ENCODE measurements at regions of chr5 and their contacts with region 1.

Region 1: GRCh38 chr5:42767491-42768105 is 11.0 kb downstream of the CCDC152 start:
- DNase-seq: no peak
- H3K4me3 ChIP-seq: no peak overlapping the region
- H3K27ac ChIP-seq: no peak overlapping the region
- H3K4me1 ChIP-seq: peaks cover 0 to under 1% of the 10 kb centered on the region in 2 donors
- H3K27me3 ChIP-seq: no peaks in the 10 kb centered on the region
- CTCF ChIP-seq: peak; percentile 30 to 73 (median 65)
- POLR2A ChIP-seq: no peak

Region 2: GRCh38 chr5:41856644-41857491 is 910.7 kb before region 1 on chr5:
- intact Hi-C with region 1: loop called in 1 of 2 experiments (anchors 5 kb)
- DNase-seq: peak; percentile 22 to 67 (median 58)
- H3K4me3 ChIP-seq: no peak overlapping the region
- H3K27ac ChIP-seq: no peak overlapping the region
- H3K4me1 ChIP-seq: no peaks in the 10 kb centered on the region
- H3K27me3 ChIP-seq: no peaks in the 10 kb centered on the region
- CTCF ChIP-seq: peak; percentile 65 to 80 (median 74)
- POLR2A ChIP-seq: no peak

Region 3: DNA sequence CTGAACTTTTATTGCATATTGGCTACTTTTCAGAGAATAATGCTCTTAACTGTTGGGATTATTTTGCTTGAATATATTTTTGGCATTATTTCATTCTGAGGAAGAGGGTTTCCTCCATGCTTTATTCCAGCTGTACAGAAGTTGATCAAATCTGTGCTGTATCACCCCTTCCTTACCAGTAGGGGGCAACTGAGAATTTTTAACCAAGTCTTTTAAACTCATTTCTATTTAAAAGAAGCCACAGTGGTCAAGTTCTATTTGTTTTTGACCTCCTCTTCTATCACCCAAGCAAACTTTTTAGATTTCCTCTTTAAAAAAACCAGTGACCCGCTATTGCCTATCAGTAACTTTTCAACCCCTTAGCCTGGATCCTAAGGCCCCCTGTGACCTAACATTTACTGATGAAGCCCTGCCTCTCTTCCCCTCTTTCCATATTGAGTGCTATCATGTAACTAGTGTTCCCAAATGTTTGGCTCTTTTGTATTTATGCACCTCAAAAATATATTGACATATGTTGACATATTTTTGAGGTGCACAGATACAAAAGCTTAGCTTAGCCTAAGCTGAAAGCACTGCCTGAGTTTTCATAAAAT is 761.9 kb before region 1 on chr5:
- intact Hi-C with region 1: loop called (anchors 10 kb)
- DNase-seq: no peak
- H3K4me3 ChIP-seq: no peak overlapping the region
- H3K27ac ChIP-seq: no peak overlapping the region
- H3K4me1 ChIP-seq: no peaks in the 10 kb centered on the region
- H3K27me3 ChIP-seq: no peaks in the 10 kb centered on the region
- CTCF ChIP-seq: peak; percentile 40 to 74 (median 60)
- POLR2A ChIP-seq: no peak

Region 4: DNA sequence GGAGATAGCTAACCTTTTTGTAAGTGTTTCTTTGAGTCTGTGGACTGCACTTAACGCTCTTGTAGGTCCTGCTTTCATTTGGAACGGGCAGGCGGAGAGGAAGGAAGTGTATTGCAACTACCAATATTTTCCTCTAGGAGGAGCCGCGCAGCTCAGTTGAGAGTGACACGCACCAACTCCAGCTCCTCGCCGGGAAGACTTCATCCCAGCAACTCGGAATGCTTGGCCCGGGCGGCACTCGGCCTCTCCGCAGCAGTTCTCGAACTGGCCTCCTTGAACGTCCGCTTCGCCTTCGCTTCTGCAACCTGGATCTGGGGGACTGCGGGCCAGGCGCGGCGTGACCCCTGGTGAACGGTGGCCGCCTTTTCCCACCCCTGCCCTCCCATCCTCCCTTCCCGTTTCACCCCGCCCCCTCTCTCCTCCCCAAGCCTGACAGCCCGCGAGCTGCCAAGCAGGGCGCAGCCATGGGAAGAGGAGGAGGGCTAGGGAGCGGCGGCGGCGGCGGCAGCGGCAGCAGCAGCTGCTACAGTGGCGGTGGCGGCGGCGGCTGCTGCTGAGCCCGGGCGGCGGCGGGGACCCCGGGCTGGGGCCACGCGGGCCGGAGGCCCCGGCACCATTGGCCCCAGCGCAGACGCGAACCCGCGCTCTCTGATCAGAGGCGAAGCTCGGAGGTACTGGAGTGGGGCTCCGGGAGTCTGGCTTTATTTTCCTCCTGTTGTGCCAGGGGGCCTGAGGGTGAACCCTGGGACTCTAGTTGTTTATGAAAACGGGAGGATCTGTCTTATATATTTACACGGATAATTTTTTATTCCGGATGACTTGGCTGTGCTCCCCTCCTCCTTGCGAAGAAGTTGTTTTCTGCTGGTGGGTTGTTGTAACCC is 344.1 kb before region 1 on chr5 and contains the start of gene GHR:
- intact Hi-C with region 1: loop called in 1 of 2 experiments (anchors 10 kb)
- DNase-seq: peak; percentile 82 to 94 (median 91)
- H3K4me3 ChIP-seq: peak within 1 kb of the TSS; percentile 34 to 69 (median 52)
- H3K27ac ChIP-seq: peak within 1 kb of the TSS in 4 of 5 donors; percentile 30 to 93 (median 76)
- H3K4me1 ChIP-seq: peaks cover 5 to 14% of the 10 kb centered on the region in 2 donors
- H3K27me3 ChIP-seq: no peaks in the 10 kb centered on the region
- CTCF ChIP-seq: peak; percentile 53 to 95 (median 84)
- POLR2A ChIP-seq: peak in 1 of 2 donors; percentile 19
- total RNA-seq, gene GHR: 8.2 to 17.1 (median 12.1) TPM

Measured in adrenal gland (tissue), 19 donors.